ENCODE measurements at regions of chr10 and their contacts with region 1.

Region 1: GRCh38 chr10:88835096-88835909 is 16.3 kb downstream of the ANKRD22 start:
- DNase-seq: peak; percentile 90
- ATAC-seq: peak; percentile 97
- H3K4me3 ChIP-seq: no peak overlapping the region
- H3K4me3 Mint-ChIP-seq: no peak overlapping the region
- H3K27ac ChIP-seq: no peak overlapping the region
- H3K27ac Mint-ChIP-seq: no peak overlapping the region
- H3K4me1 ChIP-seq: peaks cover 0 to 5% of the 10 kb centered on the region in 2 donors
- H3K4me1 Mint-ChIP-seq: peaks cover 6% of the 10 kb centered on the region
- H3K27me3 ChIP-seq: no peaks in the 10 kb centered on the region
- H3K27me3 Mint-ChIP-seq: peaks cover 3% of the 10 kb centered on the region
- CTCF ChIP-seq: peak; percentile 93

Region 2: DNA sequence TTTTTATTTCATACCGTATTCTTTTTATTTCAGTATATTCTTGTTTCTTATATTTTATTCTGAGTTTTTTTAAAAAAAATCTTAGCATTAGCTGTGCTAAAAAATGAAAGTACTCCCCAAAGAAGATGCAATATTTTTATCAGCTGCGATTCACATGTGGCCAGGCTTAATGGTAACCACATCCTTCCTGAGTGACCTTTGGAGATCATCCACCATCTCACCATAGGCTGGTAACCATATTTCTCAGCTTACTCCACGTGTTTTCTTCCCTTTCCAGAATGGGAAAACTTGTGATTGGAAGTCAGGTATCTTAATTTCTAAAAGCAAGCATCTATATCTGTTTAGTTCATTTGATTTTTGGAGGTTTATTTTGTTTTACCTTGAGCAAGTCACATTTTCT is 51.6 kb before region 1 on chr10:
- CTCF ChIA-PET with region 1: no interaction called
- POLR2A ChIA-PET with region 1: no interaction called
- intact Hi-C with region 1: no loop called
- DNase-seq: no peak
- ATAC-seq: no peak
- H3K4me3 ChIP-seq: no peak overlapping the region
- H3K4me3 Mint-ChIP-seq: no peak overlapping the region
- H3K27ac ChIP-seq: no peak overlapping the region
- H3K27ac Mint-ChIP-seq: no peak overlapping the region
- H3K4me1 ChIP-seq: no peaks in the 10 kb centered on the region
- H3K4me1 Mint-ChIP-seq: no peaks in the 10 kb centered on the region
- H3K27me3 ChIP-seq: no peaks in the 10 kb centered on the region
- H3K27me3 Mint-ChIP-seq: peaks cover 10% of the 10 kb centered on the region
- CTCF ChIP-seq: no peak

Region 3: DNA sequence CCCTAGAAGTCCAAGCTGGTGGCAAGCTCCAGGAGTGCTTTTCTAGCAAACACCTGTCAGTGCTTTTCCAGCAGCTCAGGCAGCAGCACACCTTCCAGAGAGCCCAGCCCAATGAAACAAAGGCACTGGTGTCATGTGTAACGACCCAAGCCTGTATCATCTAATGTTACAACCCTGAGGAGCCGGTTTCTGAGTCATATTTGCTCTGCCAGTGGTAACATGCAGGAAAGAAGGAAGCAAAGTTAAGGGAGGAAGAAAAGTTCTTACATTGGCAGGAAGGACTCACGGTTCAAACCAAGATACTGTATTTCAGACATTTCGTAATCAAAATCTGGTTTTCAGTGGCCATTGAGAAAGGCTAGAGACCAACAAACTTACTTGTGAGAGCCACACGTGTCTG is 16.4 kb after region 1 on chr10 and contains the start of gene ANKRD22:
- CTCF ChIA-PET with region 1: interaction called, 49 read pairs
- POLR2A ChIA-PET with region 1: no interaction called
- intact Hi-C with region 1: no loop called
- DNase-seq: no peak
- ATAC-seq: no peak
- H3K4me3 ChIP-seq: peak within 1 kb of the TSS in 1 of 5 experiments; percentile 47
- H3K4me3 Mint-ChIP-seq: no peak within 1 kb of the TSS
- H3K27ac ChIP-seq: no peak within 1 kb of the TSS
- H3K27ac Mint-ChIP-seq: no peak within 1 kb of the TSS
- H3K4me1 ChIP-seq: no peaks in the 10 kb centered on the region
- H3K4me1 Mint-ChIP-seq: no peaks in the 10 kb centered on the region
- H3K27me3 ChIP-seq: no peaks in the 10 kb centered on the region
- H3K27me3 Mint-ChIP-seq: no peaks in the 10 kb centered on the region
- CTCF ChIP-seq: no peak
- total RNA-seq, gene ANKRD22: not detected in 2 replicates

Region 4: GRCh38 chr10:88886557-88886956 is 51.3 kb after region 1 on chr10:
- CTCF ChIA-PET with region 1: interaction called, 41 read pairs
- POLR2A ChIA-PET with region 1: no interaction called
- intact Hi-C with region 1: no loop called
- DNase-seq: peak; percentile 56
- ATAC-seq: peak; percentile 77
- H3K4me3 ChIP-seq: peak overlapping the region in 3 of 5 experiments; percentile 1 to 18 (median 12)
- H3K4me3 Mint-ChIP-seq: peak overlapping the region; percentile 76
- H3K27ac ChIP-seq: peak overlapping the region; percentile 24 to 71
- H3K27ac Mint-ChIP-seq: peak overlapping the region; percentile 80
- H3K4me1 ChIP-seq: peaks cover 40 to 59% of the 10 kb centered on the region in 2 donors
- H3K4me1 Mint-ChIP-seq: peaks cover 85% of the 10 kb centered on the region
- H3K27me3 ChIP-seq: no peaks in the 10 kb centered on the region
- H3K27me3 Mint-ChIP-seq: no peaks in the 10 kb centered on the region
- CTCF ChIP-seq: no peak

Region 5: GRCh38 chr10:88926566-88927415 is 91.5 kb after region 1 on chr10:
- CTCF ChIA-PET with region 1: interaction called, 749 read pairs
- POLR2A ChIA-PET with region 1: interaction called, 3 read pairs
- intact Hi-C with region 1: no loop called
- DNase-seq: no peak
- ATAC-seq: no peak
- H3K4me3 ChIP-seq: no peak overlapping the region
- H3K4me3 Mint-ChIP-seq: no peak overlapping the region
- H3K27ac ChIP-seq: no peak overlapping the region
- H3K27ac Mint-ChIP-seq: no peak overlapping the region
- H3K4me1 ChIP-seq: no peaks in the 10 kb centered on the region
- H3K4me1 Mint-ChIP-seq: peaks cover 4% of the 10 kb centered on the region
- H3K27me3 ChIP-seq: no peaks in the 10 kb centered on the region
- H3K27me3 Mint-ChIP-seq: no peaks in the 10 kb centered on the region
- CTCF ChIP-seq: no peak

Region 6: GRCh38 chr10:88990384-88991160 is 155.3 kb after region 1 on chr10 and contains the start of gene FAS:
- CTCF ChIA-PET with region 1: interaction called, 12 read pairs
- POLR2A ChIA-PET with region 1: no interaction called
- intact Hi-C with region 1: loop called (anchors 5 kb)
- DNase-seq: peak; percentile 87
- ATAC-seq: peak; percentile 65
- H3K4me3 ChIP-seq: peak within 1 kb of the TSS; percentile 73 to 95 (median 86)
- H3K4me3 Mint-ChIP-seq: peak within 1 kb of the TSS; percentile 98
- H3K27ac ChIP-seq: peak within 1 kb of the TSS; percentile 63 to 80
- H3K27ac Mint-ChIP-seq: peak within 1 kb of the TSS; percentile 83
- H3K4me1 ChIP-seq: peaks cover 17 to 25% of the 10 kb centered on the region in 2 donors
- H3K4me1 Mint-ChIP-seq: peaks cover 43% of the 10 kb centered on the region
- H3K27me3 ChIP-seq: no peaks in the 10 kb centered on the region
- H3K27me3 Mint-ChIP-seq: no peaks in the 10 kb centered on the region
- CTCF ChIP-seq: peak; percentile 7
- total RNA-seq, gene FAS: 11.5 and 13.7 TPM in 2 replicates

Region 7: DNA sequence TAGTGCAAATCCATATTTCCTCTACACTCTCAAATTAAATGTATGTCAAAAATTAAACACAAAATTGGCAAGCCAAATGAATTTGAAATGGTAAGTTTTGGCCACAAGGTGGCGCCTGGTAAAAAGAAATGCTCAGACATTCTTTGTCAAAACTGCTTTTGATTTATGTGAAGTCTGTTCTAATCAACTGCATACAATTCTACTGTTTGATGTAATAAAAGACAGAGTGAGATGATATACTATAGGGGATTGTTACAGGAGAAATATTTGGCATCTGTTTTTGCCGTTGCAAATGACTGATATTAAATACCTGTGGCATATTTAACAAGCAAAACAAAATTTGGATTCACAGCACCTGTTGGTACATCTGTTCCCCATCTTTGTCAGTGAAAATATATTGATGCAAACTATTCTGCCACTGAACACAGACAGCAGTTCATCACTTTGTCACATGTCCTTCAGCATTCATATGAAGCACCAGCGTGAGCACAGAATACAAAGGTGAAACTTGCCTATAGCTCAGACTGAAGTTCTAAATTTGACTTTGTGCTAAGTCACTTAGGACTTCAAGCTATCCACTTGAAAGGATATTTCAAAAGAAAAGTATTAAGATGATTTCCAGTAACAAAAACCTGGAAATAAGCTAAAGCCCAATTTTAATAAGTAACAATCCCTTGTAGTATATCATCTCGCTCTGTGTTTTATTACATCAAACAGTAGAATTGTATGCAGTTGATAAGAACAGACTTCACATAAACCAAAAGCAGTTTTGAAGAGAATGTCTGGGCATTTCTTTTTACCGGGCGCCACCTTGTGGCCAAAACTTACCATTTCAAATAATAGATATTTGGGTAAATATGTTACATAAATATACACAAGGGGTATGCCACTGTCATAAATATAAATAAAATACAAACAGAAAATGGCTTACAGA is 382.0 kb after region 1 on chr10:
- CTCF ChIA-PET with region 1: interaction called, 24 read pairs
- POLR2A ChIA-PET with region 1: no interaction called
- intact Hi-C with region 1: loop called (anchors 1 kb)
- DNase-seq: peak; percentile 71
- ATAC-seq: peak; percentile 47
- H3K4me3 ChIP-seq: no peak overlapping the region
- H3K4me3 Mint-ChIP-seq: no peak overlapping the region
- H3K27ac ChIP-seq: peak overlapping the region in 1 of 2 donors; percentile 45
- H3K27ac Mint-ChIP-seq: peak overlapping the region; percentile 68
- H3K4me1 ChIP-seq: peaks cover 5 to 6% of the 10 kb centered on the region in 2 donors
- H3K4me1 Mint-ChIP-seq: peaks cover 8% of the 10 kb centered on the region
- H3K27me3 ChIP-seq: no peaks in the 10 kb centered on the region
- H3K27me3 Mint-ChIP-seq: no peaks in the 10 kb centered on the region
- CTCF ChIP-seq: peak; percentile 78